ENCODE measurements at regions of chr9 and their contacts with region 1.

Region 1: GRCh38 chr9:109012876-109013678 is at the start of gene CTNNAL1:
- DNase-seq: peak; percentile 82
- H3K4me3 Mint-ChIP-seq: peak within 1 kb of the TSS; percentile 84
- H3K27ac Mint-ChIP-seq: peak within 1 kb of the TSS; percentile 87
- H3K4me1 Mint-ChIP-seq: peaks cover 24% of the 10 kb centered on the region
- H3K27me3 Mint-ChIP-seq: no peaks in the 10 kb centered on the region
- CTCF ChIP-seq: no peak
- total RNA-seq, gene CTNNAL1: 48.6 and 85.6 TPM in 2 replicates

Region 2: DNA sequence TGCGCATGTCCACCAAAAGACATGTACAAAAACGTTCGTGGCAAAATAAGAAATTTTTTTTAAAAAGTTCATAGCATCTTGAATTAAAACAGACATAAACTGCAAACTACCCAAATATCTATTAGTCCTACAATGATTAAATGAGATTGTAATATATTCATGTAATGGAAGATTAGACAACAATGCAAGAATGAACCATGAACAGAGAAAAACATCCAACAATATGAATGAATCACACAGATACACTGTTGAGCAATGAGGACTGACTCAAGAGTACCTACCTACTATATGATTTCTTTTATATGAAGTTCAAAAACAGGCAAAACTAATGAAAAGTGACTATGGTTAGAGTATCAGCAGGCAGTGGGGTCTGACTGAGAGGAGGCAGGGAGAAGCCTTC is 18.2 kb after region 1 on chr9:
- CTCF ChIA-PET with region 1: interaction called, 3 read pairs
- POLR2A ChIA-PET with region 1: interaction called, 7 read pairs
- intact Hi-C with region 1: loop called (anchors 2 kb)
- DNase-seq: peak; percentile 62
- H3K4me3 Mint-ChIP-seq: no peak overlapping the region
- H3K27ac Mint-ChIP-seq: no peak overlapping the region
- H3K4me1 Mint-ChIP-seq: peaks cover 14% of the 10 kb centered on the region
- H3K27me3 Mint-ChIP-seq: no peaks in the 10 kb centered on the region
- CTCF ChIP-seq: no peak

Region 3: GRCh38 chr9:109110326-109111021 is 97.4 kb after region 1 on chr9:
- CTCF ChIA-PET with region 1: no interaction called
- POLR2A ChIA-PET with region 1: interaction called, 6 read pairs
- intact Hi-C with region 1: loop called (anchors 2 kb)
- DNase-seq: peak; percentile 61
- H3K4me3 Mint-ChIP-seq: peak overlapping the region; percentile 59
- H3K27ac Mint-ChIP-seq: peak overlapping the region; percentile 95
- H3K4me1 Mint-ChIP-seq: peaks cover 54% of the 10 kb centered on the region
- H3K27me3 Mint-ChIP-seq: no peaks in the 10 kb centered on the region
- CTCF ChIP-seq: no peak